GM10248 (cell line): ENCODE measurements at regions of chr15 and their contacts with region 1.

Region 1: DNA sequence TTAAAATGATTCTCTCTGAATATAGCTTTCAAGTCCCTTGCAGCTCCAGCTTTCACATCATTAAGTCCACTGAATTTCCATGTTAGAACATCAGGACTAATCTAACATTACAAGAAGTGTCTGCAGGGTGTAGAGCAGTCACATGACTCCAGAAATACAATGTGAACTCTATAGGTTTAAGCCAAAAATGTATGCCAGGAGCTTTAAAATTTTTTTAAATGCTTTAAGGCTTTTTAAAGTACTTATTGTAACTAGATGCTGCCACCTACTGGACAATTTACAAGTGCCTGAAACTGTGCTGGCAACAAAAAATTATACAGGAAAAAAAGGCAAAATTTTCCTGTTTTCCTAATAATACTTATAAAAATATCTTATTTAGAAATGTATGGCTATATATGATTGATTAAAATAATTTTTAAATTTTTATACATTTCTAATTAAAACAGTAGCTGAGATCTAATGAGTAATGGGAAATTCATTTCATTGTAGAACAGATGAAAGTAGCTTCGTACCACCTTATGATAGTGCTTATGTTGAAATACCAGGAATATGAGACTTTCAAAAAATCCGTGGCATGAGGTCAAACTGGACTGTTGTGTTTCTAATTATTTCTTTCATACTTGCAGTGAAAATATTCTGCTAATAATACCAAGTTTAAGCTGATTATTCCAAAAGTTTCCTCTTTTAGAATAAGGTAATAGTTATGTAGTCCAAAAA is 25.7 kb downstream of the FSIP1 start:
- DNase-seq: no peak
- CTCF ChIP-seq: peak; percentile 73

Region 2: DNA sequence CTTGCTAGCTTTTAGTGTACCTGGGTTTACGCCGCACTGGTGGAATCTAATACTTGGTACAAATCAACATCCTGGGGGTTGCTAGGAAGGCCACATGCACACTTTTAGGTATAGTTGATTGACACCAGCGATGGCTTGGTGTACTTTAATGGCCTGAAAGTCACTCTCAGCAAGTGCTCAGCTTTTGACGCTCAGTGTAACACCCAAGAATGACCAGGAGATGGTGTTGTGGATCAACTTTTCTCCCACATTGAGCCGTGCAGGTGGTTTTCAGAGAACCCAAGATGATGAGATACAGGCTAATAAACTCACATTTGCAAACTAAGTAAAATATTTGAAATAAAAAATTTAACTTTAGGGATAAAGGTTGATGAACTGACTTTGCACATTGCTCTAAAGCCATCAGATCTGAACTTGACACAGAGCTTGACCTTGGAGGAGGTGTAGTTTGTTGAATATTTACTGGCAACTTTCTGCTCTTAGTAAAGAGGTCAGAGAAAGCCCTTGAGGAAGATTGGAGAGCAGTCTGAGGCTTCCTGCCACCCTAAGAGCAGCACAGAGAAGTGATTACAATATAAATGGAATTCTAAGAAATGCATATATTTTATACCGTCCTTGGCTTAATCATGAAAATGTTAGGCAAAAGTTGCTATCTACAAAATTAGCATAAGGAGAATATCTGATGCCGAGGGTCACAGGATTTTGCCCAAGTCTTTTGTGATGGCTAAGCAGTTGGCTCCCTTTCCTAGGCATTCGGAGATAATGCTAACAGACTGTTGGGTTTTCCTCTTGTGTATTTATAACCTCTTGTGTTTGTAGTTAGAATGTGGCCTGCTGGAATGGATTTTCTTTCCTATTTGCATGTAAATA is 1048.9 kb before region 1 on chr15:
- CTCF ChIA-PET with region 1: interaction called, 16 read pairs
- POLR2A ChIA-PET with region 1: no interaction called
- DNase-seq: peak; percentile 52
- CTCF ChIP-seq: peak; percentile 61

Region 3: GRCh38 chr15:39594056-39594763 is 162.8 kb before region 1 on chr15:
- CTCF ChIA-PET with region 1: interaction called, 18 read pairs
- POLR2A ChIA-PET with region 1: no interaction called
- DNase-seq: no peak
- CTCF ChIP-seq: peak; percentile 28

Region 4: DNA sequence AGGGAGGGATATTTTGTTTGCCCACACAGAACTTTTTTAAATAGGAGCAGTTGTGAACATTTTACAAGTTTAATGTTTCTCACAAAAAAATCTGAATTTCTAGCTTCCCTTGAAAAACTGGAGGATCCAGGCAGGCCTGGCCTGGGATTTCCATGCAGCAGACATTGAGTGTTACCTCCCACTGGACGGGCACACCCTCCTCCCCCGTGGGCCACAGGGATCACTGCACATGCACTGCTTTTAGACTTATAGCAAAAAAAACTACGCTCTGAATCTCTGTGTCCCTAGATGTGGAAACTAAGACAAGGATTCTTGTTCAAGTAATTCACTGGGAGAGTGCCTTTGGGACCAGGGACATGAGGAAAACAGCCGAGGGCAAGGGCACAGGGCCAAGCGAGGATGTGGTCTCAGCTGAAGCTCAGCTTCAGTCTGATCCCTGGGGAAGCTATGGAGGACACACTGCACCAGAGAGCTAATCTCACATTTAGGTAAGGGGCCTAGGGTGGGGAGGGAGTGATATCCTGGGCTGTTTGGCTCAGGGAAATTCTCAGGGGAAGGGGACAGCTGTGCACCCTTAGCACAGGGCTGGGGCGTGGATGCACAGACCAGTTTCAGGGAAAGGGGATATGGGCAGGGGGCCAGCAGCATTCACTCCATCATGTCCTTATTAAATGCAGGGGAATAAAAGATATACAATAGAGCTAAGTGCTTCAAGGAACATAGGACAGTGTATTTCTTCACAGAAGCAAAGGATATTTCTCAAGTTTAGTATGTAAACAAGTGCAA is 20.4 kb before region 1 on chr15:
- CTCF ChIA-PET with region 1: interaction called, 17 read pairs
- POLR2A ChIA-PET with region 1: no interaction called
- DNase-seq: no peak
- CTCF ChIP-seq: no peak

Region 5: GRCh38 chr15:39799552-39800011 is 42.6 kb after region 1 on chr15:
- CTCF ChIA-PET with region 1: interaction called, 12 read pairs
- POLR2A ChIA-PET with region 1: no interaction called
- DNase-seq: no peak
- CTCF ChIP-seq: no peak